ENCODE measurements at regions of chr2 and their contacts with region 1.

Region 1: DNA sequence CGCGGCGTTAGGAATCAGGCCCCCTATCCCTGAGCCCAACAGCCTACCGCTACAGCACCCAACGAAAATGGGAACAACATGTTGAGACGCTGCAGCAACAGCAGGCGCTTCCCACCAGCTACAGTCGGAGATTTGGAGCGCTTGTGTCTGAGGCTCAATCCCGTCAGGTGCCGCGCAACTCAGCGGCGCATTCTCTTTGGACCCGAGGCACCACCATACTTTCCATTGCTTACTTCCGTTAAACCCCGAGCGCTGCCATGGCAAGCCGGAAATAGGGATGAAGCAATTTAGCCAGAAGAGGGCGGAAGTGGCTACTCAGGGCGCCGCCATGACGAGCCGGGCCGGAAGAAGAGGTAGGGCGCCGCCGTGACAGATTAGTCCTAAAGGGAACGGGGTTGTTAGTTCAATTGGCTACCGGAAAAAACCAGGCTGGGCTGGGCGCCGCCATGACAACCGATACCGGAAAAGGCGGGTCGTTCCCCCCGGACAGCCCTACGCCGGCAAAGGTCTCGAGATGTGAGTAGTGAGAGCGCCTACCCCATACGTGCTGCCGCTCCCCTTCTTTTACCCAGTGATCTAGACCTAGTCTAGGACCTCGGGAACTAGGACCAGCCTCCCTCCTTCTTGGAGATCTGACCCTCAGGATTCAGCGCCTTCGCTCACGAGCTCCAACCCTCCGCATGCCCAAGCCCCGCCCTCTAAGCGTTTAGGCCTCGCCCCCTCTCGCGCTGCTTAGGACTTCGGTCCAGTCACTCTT is at the start of gene CHCHD5:
- DNase-seq: peak; percentile 98
- H3K4me3 ChIP-seq: peak within 1 kb of the TSS; percentile 63 to 76
- H3K27ac ChIP-seq: peak within 1 kb of the TSS; percentile 92 to 94
- H3K4me1 ChIP-seq: peaks cover 0 to 19% (median 13%) of the 10 kb centered on the region in 4 donors
- H3K27me3 ChIP-seq: no peaks in the 10 kb centered on the region
- CTCF ChIP-seq: peak; percentile 5 to 17

Region 2: GRCh38 chr2:112606488-112606902 is 22.2 kb after region 1 on chr2:
- intact Hi-C with region 1: no loop called
- DNase-seq: no peak
- H3K4me3 ChIP-seq: no peak overlapping the region
- H3K27ac ChIP-seq: no peak overlapping the region
- H3K4me1 ChIP-seq: no peaks in the 10 kb centered on the region
- H3K27me3 ChIP-seq: no peaks in the 10 kb centered on the region
- CTCF ChIP-seq: no peak

Region 3: GRCh38 chr2:112645310-112646101 is 61.2 kb after region 1 on chr2 and contains the start of gene SLC20A1:
- intact Hi-C with region 1: loop called (anchors 10 kb)
- DNase-seq: peak; percentile 90 to 97
- H3K4me3 ChIP-seq: peak within 1 kb of the TSS; percentile 68 to 79
- H3K27ac ChIP-seq: peak within 1 kb of the TSS; percentile 89 to 94
- H3K4me1 ChIP-seq: peaks cover 0 to 42% (median 15%) of the 10 kb centered on the region in 4 donors
- H3K27me3 ChIP-seq: no peaks in the 10 kb centered on the region
- CTCF ChIP-seq: peak; percentile 9 to 30

Measured in tibial artery (tissue), 4 donors.